Activated T-helper 2 cell treated with anti-CD3 and anti-CD28 coated beads, Interferon-gamma antibody, Interleukin-2, Interleukin-4, amounts not matched to agents 10 μg/mL and 5 μg/mL and 100 μg/mL, durations not matched to agents 14 hours and 24 hours and 36 hours (primary cell): ENCODE measurements at regions of chr22 and their contacts with region 1.

Region 1: GRCh38 chr22:28402539-28402938 is 277.1 kb downstream of the TTC28 start:
- DNase-seq: no peak
- H3K4me3 Mint-ChIP-seq: no peak overlapping the region
- H3K27ac Mint-ChIP-seq: peak overlapping the region; percentile 74
- H3K4me1 Mint-ChIP-seq: peaks cover 47% of the 10 kb centered on the region
- H3K27me3 Mint-ChIP-seq: no peaks in the 10 kb centered on the region

Region 2: GRCh38 chr22:28329186-28330073 is 73.1 kb before region 1 on chr22:
- intact Hi-C with region 1: loop called (anchors 1 kb)
- DNase-seq: no peak
- H3K4me3 Mint-ChIP-seq: no peak overlapping the region
- H3K27ac Mint-ChIP-seq: no peak overlapping the region
- H3K4me1 Mint-ChIP-seq: peaks cover 15% of the 10 kb centered on the region
- H3K27me3 Mint-ChIP-seq: peaks cover 11% of the 10 kb centered on the region